WTC11 (cell line): ENCODE measurements at regions of chr17 and their contacts with region 1.

Region 1: GRCh38 chr17:3738562-3739295 is 15.0 kb downstream of the HASPIN start:
- DNase-seq: no peak
- ATAC-seq: peak; percentile 14; the same call in 1 of the 2 replicates
- H3K4me3 Mint-ChIP-seq: peak overlapping the region; percentile 45; the same call in 1 of the 2 replicates
- H3K27ac Mint-ChIP-seq: no peak overlapping the region
- H3K4me1 Mint-ChIP-seq: peaks cover 22% of the 10 kb centered on the region
- H3K27me3 Mint-ChIP-seq: no peaks in the 10 kb centered on the region
- CTCF ChIP-seq: no peak

Region 2: GRCh38 chr17:3626831-3627768 is 111.6 kb before region 1 on chr17:
- CTCF ChIA-PET with region 1: no interaction called
- POLR2A ChIA-PET with region 1: no interaction called
- DNase-seq: no peak
- ATAC-seq: no peak
- H3K4me3 Mint-ChIP-seq: no peak overlapping the region
- H3K27ac Mint-ChIP-seq: no peak overlapping the region
- H3K4me1 Mint-ChIP-seq: no peaks in the 10 kb centered on the region
- H3K27me3 Mint-ChIP-seq: no peaks in the 10 kb centered on the region
- CTCF ChIP-seq: no peak

Region 3: DNA sequence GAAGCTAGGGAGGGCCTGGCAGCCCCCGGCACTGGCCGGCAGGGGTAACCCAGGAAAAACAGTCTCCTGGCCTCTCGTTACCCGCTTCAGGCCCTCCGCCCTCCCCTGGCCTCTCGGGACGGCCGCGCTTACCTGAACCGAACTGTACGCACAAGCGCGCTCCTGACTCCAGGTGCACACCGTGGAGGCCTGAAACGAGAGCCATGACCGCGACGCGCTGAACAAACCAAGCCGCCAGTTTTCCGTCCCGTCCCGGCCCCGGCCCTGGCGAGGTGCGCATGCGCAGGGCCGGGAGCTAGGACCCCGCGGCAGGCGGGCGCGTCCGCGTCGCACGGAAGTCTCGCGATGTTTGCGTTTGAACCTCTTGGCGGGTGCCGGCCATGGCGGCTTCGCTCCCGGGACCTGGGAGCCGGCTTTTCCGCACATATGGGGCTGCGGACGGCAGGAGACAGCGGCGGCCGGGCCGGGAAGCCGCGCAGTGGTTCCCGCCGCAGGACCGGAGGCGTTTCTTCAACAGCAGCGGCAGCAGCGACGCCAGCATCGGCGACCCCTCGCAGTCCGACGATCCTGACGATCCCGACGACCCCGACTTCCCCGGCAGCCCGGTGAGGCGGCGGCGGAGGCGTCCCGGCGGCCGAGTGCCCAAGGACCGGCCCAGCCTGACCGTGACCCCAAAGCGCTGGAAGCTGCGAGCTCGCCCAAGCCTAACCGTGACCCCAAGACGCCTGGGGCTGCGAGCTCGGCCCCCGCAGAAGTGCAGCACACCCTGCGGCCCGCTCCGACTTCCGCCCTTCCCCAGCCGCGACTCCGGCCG is 15.0 kb before region 1 on chr17 and contains the start of gene HASPIN:
- CTCF ChIA-PET with region 1: interaction called, 31 read pairs
- POLR2A ChIA-PET with region 1: no interaction called
- DNase-seq: peak; percentile 91
- ATAC-seq: peak; percentile 88
- H3K4me3 Mint-ChIP-seq: peak within 1 kb of the TSS; percentile 96
- H3K27ac Mint-ChIP-seq: peak within 1 kb of the TSS; percentile 85
- H3K4me1 Mint-ChIP-seq: peaks cover 29% of the 10 kb centered on the region
- H3K27me3 Mint-ChIP-seq: no peaks in the 10 kb centered on the region
- CTCF ChIP-seq: no peak
- total RNA-seq, gene HASPIN: 30.0 to 30.8 TPM (median 30.4 TPM) in 3 replicates

Region 4: GRCh38 chr17:3773511-3773910 is 34.8 kb after region 1 on chr17:
- CTCF ChIA-PET with region 1: interaction called, 125 read pairs
- POLR2A ChIA-PET with region 1: no interaction called
- DNase-seq: no peak
- ATAC-seq: no peak
- H3K4me3 Mint-ChIP-seq: no peak overlapping the region
- H3K27ac Mint-ChIP-seq: no peak overlapping the region
- H3K4me1 Mint-ChIP-seq: peaks cover 15% of the 10 kb centered on the region
- H3K27me3 Mint-ChIP-seq: no peaks in the 10 kb centered on the region; the same call in 1 of the 2 replicates
- CTCF ChIP-seq: no peak

Region 5: DNA sequence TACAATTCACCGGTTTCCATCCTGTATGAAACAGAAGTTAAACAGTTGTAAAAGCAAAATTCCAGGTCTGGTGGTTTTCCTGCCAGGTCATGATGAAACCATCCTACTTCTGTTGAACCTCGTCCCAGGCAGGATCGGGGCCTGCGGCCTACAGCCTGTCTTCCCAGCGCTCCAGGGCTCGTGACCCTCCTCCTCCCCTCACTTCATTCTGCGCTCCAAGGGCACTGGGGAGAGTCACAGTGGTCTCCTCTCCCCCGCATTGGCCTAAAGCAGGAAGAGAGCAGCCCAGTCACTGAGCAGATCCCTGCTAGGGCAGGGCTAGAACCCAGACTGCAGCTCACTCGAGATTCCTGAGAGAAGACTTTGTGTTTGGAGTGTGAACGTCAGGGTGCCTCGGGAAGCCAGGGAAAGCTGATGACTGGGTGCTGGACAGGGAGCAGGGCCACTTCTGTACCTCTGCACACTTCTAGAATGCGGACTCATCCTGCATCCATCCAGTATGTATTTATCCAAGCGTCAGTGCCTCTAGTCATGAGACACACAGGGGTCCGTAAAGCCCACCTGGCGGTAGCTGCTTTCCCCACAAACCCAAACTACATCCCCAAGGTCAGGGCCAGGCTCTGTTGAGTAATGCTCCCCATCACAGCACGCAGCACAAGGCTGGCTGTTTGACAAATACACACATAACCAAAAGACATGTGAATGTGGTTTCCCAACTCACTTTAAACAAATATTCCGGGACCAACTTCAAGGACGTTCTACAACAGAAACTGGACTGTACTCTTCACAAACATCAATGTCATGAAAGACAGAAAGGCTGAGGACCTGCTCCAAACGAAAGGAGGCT is 64.0 kb after region 1 on chr17:
- CTCF ChIA-PET with region 1: interaction called, 76 read pairs
- POLR2A ChIA-PET with region 1: no interaction called
- DNase-seq: no peak
- ATAC-seq: no peak
- H3K4me3 Mint-ChIP-seq: no peak overlapping the region
- H3K27ac Mint-ChIP-seq: peak overlapping the region; percentile 57
- H3K4me1 Mint-ChIP-seq: no peaks in the 10 kb centered on the region
- H3K27me3 Mint-ChIP-seq: no peaks in the 10 kb centered on the region; the same call in 1 of the 2 replicates
- CTCF ChIP-seq: no peak

Region 6: DNA sequence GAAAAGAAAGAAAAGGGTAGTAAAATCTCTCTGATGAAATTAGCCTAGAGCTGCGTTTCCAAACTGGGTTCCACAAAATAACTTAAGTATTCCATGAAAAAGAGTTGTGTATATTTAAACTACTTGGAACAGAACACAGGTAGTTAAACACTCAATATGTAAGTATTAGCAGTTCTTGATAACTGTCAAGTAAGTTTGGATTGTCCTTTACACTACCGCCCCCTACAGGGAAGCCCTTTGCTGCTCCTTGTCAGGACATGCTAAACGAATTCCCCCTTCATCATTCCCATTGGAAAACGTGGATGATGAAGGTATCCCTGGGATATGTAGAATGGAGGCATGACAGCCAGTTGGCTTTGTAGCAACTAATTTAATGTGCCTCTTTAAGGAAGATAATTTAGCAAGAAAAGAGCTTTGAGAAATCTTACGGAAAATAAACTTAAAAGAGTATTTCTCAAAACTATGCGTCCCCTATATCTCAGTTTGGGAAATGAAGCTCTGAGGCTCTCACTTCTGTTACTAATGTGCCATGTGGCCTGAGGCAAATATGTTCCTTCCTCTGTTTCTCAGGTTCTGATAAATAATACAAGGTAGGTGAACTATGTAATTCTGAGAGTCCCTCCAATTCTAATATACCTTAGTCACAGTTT is 88.5 kb after region 1 on chr17:
- CTCF ChIA-PET with region 1: interaction called, 58 read pairs
- POLR2A ChIA-PET with region 1: no interaction called
- DNase-seq: peak; percentile 79
- ATAC-seq: peak; percentile 53
- H3K4me3 Mint-ChIP-seq: no peak overlapping the region
- H3K27ac Mint-ChIP-seq: no peak overlapping the region
- H3K4me1 Mint-ChIP-seq: no peaks in the 10 kb centered on the region
- H3K27me3 Mint-ChIP-seq: no peaks in the 10 kb centered on the region
- CTCF ChIP-seq: peak; percentile 54

Region 7: GRCh38 chr17:3907483-3908216 is 168.9 kb after region 1 on chr17:
- CTCF ChIA-PET with region 1: interaction called, 20 read pairs
- POLR2A ChIA-PET with region 1: no interaction called
- DNase-seq: peak; percentile 46
- ATAC-seq: peak; percentile 66
- H3K4me3 Mint-ChIP-seq: no peak overlapping the region
- H3K27ac Mint-ChIP-seq: 0 out of 2 replicates have a peak overlapping the region, but pooled peaks have one; percentile 51
- H3K4me1 Mint-ChIP-seq: peaks cover 13% of the 10 kb centered on the region
- H3K27me3 Mint-ChIP-seq: no peaks in the 10 kb centered on the region
- CTCF ChIP-seq: no peak